H1 (cell line): ENCODE measurements at regions of chr3 and their contacts with region 1.

Region 1: DNA sequence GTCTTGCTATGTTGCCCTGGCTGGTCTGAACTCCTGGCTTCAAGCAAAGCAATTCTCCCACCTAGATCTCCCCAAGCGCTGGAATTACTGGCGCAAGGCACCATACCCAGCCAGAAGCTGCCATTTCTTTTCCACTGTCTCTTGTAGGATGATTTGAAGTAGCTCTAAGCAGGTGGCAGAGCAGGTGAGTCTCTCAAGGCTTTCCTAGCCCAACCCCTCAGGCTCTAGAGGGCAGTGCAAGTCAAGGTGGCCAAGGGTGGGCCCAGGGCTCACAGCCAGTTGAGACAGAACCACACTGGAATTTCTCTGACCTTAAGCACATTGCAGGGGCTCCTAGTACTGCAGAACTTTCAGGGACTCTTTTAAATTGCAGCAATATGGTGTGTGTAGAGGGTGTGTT is 15.6 kb upstream of the DAG1 start:
- DNase-seq: peak; percentile 61 to 71
- H3K4me3 ChIP-seq: no peak overlapping the region
- H3K27ac ChIP-seq: no peak overlapping the region
- H3K4me1 ChIP-seq: peaks cover 5 to 13% (median 11%) of the 10 kb centered on the region in 4 experiments
- H3K27me3 ChIP-seq: no peaks in the 10 kb centered on the region
- CTCF ChIP-seq: peak; percentile 71 to 82 (median 81)
- EP300 ChIP-seq: no peak
- POLR2A ChIP-seq: no peak
- RAD21 ChIP-seq: peak; percentile 94 to 96

Region 2: DNA sequence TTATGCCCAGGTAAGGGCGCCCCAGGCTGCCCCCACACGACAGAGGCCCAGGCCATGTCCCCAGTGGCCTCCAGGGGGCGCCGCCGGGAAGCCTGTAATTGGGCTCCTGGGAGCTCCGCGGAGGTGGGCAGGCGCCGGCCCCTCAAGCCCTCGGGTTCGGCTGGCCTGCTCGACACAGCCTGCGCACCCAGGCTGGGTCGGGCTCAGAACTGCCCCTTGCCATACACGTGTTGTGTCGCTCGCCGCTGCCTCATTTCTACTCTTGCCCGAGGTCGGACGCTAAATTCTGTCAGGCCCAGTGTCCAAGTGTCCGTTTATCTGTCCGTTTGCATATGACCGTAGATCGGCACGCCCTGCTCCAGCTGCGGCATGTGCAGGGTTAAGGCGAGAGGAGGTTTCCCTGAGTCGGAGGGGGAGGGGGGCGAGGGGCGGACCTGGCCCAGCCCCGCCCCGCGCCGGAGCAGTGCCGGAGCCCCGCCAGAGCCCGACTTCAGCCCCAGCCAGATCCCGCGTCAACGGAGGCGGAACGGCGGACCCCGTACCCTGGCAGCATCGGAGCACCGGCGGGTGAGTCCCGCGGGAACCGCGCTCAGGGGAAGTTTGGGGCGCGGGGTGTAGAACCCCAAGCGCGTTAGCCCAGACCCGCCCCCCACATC is 283.2 kb before region 1 on chr3 and contains the start of gene KLHDC8B:
- CTCF ChIA-PET with region 1: interaction called, 14 read pairs
- POLR2A ChIA-PET with region 1: no interaction called
- DNase-seq: peak; percentile 59 to 98
- H3K4me3 ChIP-seq: peak within 1 kb of the TSS; percentile 66 to 94 (median 78)
- H3K27ac ChIP-seq: no peak within 1 kb of the TSS
- H3K4me1 ChIP-seq: peaks cover 0 to 29% (median 15%) of the 10 kb centered on the region in 4 experiments; a peak in 6 of 7 replicates
- H3K27me3 ChIP-seq: peaks cover 0 to 3% (median 0%) of the 10 kb centered on the region in 4 experiments; a peak in 2 of 7 replicates
- CTCF ChIP-seq: peak in 2 of 3 experiments; percentile 88 to 95; a peak in 3 of 4 replicates
- EP300 ChIP-seq: no peak
- POLR2A ChIP-seq: no peak
- RAD21 ChIP-seq: peak; percentile 72 to 85
- total RNA-seq, gene KLHDC8B: 15.8 and 18.1 TPM in 2 replicates

Region 3: GRCh38 chr3:49339945-49340800 is 114.3 kb before region 1 on chr3 and contains the start of gene USP4:
- CTCF ChIA-PET with region 1: interaction called, 18 read pairs
- POLR2A ChIA-PET with region 1: interaction called, 8 read pairs
- DNase-seq: peak; percentile 43 to 81
- H3K4me3 ChIP-seq: peak within 1 kb of the TSS; percentile 59 to 75 (median 74)
- H3K27ac ChIP-seq: peak within 1 kb of the TSS; percentile 70; the same call in 1 of the 2 replicates
- H3K4me1 ChIP-seq: peaks cover 0 to 11% (median 5%) of the 10 kb centered on the region in 4 experiments; a peak in 4 of 7 replicates
- H3K27me3 ChIP-seq: no peaks in the 10 kb centered on the region; a peak in 1 of 7 replicates
- CTCF ChIP-seq: peak; percentile 42 to 71 (median 47)
- EP300 ChIP-seq: no peak
- POLR2A ChIP-seq: peak; percentile 39 to 44; a peak in 2 of 3 replicates
- RAD21 ChIP-seq: peak; percentile 53 to 63
- total RNA-seq, gene USP4: 27.8 and 28.3 TPM in 2 replicates

Region 4: DNA sequence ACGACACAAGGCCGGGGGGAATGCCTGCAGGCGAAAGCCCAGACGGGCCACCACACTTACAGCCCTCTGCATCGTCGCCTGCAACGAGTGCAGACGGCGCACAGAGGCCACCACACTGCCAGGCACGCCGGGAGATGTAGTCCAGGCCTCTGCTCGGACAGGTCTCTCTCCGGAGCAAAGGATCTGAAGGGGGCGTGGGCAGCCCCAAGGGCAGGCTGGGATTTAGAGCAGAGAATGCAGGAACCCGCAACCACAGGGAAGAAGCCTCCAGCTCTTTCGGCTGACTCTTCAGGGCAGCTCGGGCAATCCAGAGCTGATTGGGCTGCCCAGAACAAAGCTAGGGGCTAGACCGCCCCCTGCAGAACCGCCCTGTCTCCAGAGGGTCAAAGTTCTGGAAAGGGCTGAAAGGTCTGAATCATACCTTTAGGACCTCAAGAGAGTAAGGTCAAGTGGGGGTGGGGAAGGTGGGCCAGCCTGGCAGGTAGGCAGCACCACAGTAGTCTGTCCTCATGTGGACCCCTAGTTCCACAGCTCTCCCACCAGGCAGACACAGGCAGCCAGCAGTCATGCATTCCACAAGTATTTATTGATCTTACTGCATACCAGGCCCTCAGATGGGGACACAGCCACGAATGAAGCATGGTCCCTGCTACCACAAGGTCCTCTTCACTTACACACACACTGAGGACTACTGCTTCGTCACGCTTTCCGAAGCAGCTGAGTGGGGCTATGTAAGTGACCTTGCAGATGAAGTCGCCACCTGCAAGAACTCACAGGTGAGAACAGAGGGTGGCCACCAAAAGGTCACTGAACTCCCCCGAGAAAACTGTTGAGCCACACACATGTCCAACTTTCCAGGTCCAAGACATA is 31.8 kb before region 1 on chr3 and contains the start of gene AMT:
- CTCF ChIA-PET with region 1: interaction called, 17 read pairs
- POLR2A ChIA-PET with region 1: interaction called, 9 read pairs
- DNase-seq: peak; percentile 82 to 85
- H3K4me3 ChIP-seq: peak within 1 kb of the TSS; percentile 52 to 94 (median 84)
- H3K27ac ChIP-seq: peak within 1 kb of the TSS; percentile 60
- H3K4me1 ChIP-seq: peaks cover 6 to 12% (median 7%) of the 10 kb centered on the region in 4 experiments
- H3K27me3 ChIP-seq: 0 out of 7 replicates have a peak, but pooled peaks cover 0 to 1% (median 0%) of the 10 kb centered on the region in 4 experiments
- CTCF ChIP-seq: peak in 1 of 3 experiments; percentile 5; a peak in 1 of 4 replicates
- EP300 ChIP-seq: no peak
- POLR2A ChIP-seq: peak in 1 of 2 experiments; percentile 72; a peak in 2 of 3 replicates
- RAD21 ChIP-seq: peak; percentile 13 to 17; a peak in 1 of 4 replicates
- total RNA-seq, gene AMT: 44.3 and 46.5 TPM in 2 replicates

Region 5: GRCh38 chr3:49476563-49476962 is 22.1 kb after region 1 on chr3:
- CTCF ChIA-PET with region 1: interaction called, 32 read pairs
- POLR2A ChIA-PET with region 1: interaction called, 205 read pairs
- DNase-seq: no peak
- H3K4me3 ChIP-seq: no peak overlapping the region
- H3K27ac ChIP-seq: no peak overlapping the region
- H3K4me1 ChIP-seq: peaks cover 3 to 8% (median 5%) of the 10 kb centered on the region in 4 experiments
- H3K27me3 ChIP-seq: no peaks in the 10 kb centered on the region
- CTCF ChIP-seq: no peak
- EP300 ChIP-seq: no peak
- POLR2A ChIP-seq: no peak
- RAD21 ChIP-seq: no peak

Region 6: DNA sequence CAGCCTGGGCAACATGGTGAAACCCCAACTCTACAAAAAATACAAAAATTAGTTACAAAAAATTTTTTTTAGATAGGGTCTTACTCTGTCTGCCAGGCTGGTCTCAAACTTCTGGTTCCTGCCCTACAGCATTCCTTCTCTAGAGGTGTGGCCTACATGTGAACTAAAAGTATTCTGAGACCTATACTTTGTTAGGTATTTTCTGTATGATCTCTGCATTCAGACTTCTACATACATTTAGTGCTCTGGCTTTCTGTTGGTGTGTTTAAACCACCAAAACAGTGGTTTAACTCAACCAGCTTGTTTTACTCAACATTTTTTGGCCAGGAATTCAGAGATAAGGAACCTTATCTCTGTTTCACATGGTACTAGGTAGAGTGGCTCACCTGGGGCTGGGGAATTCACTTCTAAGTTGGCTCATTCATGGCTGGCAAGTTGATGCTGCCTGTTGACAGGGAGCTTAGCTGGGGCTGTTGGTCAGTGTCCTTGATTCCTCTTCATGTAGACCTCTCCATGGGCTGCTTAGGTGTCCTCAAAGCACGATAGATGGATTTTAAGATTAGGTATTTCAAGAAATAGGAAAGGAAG is 58.4 kb after region 1 on chr3:
- CTCF ChIA-PET with region 1: interaction called, 25 read pairs
- POLR2A ChIA-PET with region 1: no interaction called
- DNase-seq: no peak
- H3K4me3 ChIP-seq: no peak overlapping the region
- H3K27ac ChIP-seq: no peak overlapping the region
- H3K4me1 ChIP-seq: no peaks in the 10 kb centered on the region
- H3K27me3 ChIP-seq: no peaks in the 10 kb centered on the region
- CTCF ChIP-seq: no peak
- EP300 ChIP-seq: no peak
- POLR2A ChIP-seq: no peak
- RAD21 ChIP-seq: no peak

Region 7: GRCh38 chr3:49539659-49540560 is 85.5 kb after region 1 on chr3:
- CTCF ChIA-PET with region 1: interaction called, 50 read pairs
- POLR2A ChIA-PET with region 1: interaction called, 4 read pairs
- DNase-seq: peak; percentile 87 to 99
- H3K4me3 ChIP-seq: peak overlapping the region; percentile 26 to 71 (median 60)
- H3K27ac ChIP-seq: no peak overlapping the region
- H3K4me1 ChIP-seq: peaks cover 0 to 21% (median 3%) of the 10 kb centered on the region in 4 experiments; a peak in 6 of 7 replicates
- H3K27me3 ChIP-seq: no peaks in the 10 kb centered on the region
- CTCF ChIP-seq: peak in 2 of 3 experiments; percentile 88 to 96; a peak in 3 of 4 replicates
- EP300 ChIP-seq: no peak
- POLR2A ChIP-seq: peak in 1 of 2 experiments; percentile 64; a peak in 2 of 3 replicates
- RAD21 ChIP-seq: peak; percentile 96

Region 8: GRCh38 chr3:49636883-49637609 is 182.6 kb after region 1 on chr3:
- CTCF ChIA-PET with region 1: no interaction called
- POLR2A ChIA-PET with region 1: no interaction called
- DNase-seq: no peak
- H3K4me3 ChIP-seq: no peak overlapping the region
- H3K27ac ChIP-seq: no peak overlapping the region
- H3K4me1 ChIP-seq: peaks cover 0 to 3% (median 0%) of the 10 kb centered on the region in 4 experiments; a peak in 1 of 7 replicates
- H3K27me3 ChIP-seq: no peaks in the 10 kb centered on the region
- CTCF ChIP-seq: no peak
- EP300 ChIP-seq: no peak
- POLR2A ChIP-seq: no peak
- RAD21 ChIP-seq: no peak